Psoas muscle (tissue), 8 donors: ENCODE measurements at regions of chr4 and their contacts with region 1.

Region 1: DNA sequence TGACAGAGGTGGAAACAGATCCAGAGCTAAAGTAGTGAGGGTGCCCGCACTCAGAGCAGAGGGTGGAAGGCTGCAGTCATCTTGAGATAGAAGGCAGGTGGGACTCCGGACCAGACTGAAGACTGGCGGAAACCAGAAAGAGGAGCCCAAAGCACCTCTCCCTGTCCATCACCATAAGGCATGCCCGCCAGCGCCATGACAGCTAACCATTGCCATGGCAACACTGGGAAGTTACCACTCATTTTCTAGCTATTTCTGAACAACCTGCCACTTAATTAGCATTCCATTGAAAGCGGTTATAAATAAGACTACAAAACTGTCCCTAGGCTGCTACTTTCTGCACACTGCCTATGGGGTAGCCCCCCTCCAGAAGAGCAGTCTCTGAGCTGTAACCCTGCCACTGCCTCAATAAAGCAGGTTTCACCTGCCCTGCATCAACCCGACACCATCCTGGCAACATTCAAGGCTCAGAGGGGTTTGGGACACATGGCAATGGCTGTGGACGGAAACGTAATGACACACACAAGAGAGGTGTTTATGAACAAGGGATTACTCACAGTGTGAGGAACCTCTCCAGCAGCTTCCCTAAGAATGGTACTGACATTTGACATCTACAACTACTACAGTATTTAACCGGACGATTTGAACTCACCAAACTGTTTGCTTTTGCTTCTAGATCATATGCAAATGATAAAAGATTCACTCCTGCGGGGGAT is 27.8 kb upstream of the FGFBP2 start:
- DNase-seq: no peak
- ATAC-seq: peak in 3 of 4 donors; percentile 53 to 77 (median 74)
- H3K4me3 ChIP-seq: no peak overlapping the region
- H3K27ac ChIP-seq: no peak overlapping the region
- H3K4me1 ChIP-seq: no peaks in the 10 kb centered on the region
- H3K27me3 ChIP-seq: no peaks in the 10 kb centered on the region
- CTCF ChIP-seq: no peak

Region 2: GRCh38 chr4:15744016-15744545 is 246.6 kb before region 1 on chr4:
- intact Hi-C with region 1: loop called in 1 of 2 experiments (anchors 5 kb)
- DNase-seq: no peak
- ATAC-seq: no peak
- H3K4me3 ChIP-seq: no peak overlapping the region
- H3K27ac ChIP-seq: no peak overlapping the region
- H3K4me1 ChIP-seq: peaks cover under 1% of the 10 kb centered on the region
- H3K27me3 ChIP-seq: no peaks in the 10 kb centered on the region
- CTCF ChIP-seq: no peak

Region 3: DNA sequence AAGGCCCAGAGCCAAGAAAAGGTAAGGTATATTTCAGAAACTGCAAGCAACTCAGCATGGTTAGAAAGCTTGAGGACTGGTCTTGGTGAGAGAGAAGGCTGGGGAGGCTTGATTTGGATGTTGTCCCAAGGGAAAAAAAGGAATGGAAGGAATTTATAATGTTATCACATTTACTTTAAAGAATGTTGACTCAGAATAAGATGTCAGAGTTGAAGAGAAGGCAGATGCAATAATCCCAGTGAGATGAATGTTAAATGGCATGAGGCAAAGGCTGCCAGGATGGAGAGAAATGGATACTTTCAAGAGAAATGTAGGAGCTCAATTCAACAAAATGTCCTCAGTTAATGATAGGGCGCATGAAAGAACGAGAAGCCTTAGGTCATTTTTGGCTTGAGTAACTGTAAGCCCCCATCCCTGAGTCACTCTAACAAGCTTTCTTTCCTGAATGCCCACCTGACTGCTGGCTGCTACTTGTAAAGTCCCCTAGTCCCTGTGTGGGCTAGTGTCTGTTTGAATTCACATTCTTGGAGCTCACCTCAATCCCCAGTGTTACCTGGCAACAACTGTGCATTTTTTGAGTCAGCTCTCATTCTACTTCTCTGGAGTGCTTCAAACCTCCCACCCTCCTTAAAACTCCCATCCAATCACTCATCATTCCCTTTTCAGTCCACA is 338.5 kb after region 1 on chr4:
- intact Hi-C with region 1: no loop called
- DNase-seq: no peak
- ATAC-seq: no peak
- H3K4me3 ChIP-seq: no peak overlapping the region
- H3K27ac ChIP-seq: no peak overlapping the region
- H3K4me1 ChIP-seq: no peaks in the 10 kb centered on the region
- H3K27me3 ChIP-seq: no peaks in the 10 kb centered on the region
- CTCF ChIP-seq: no peak